Activated CD4-positive, alpha-beta T cell treated with anti-CD3 and anti-CD28 coated beads for 36 hours (primary cell): ENCODE measurements at regions of chr13 and their contacts with region 1.

Region 1: DNA sequence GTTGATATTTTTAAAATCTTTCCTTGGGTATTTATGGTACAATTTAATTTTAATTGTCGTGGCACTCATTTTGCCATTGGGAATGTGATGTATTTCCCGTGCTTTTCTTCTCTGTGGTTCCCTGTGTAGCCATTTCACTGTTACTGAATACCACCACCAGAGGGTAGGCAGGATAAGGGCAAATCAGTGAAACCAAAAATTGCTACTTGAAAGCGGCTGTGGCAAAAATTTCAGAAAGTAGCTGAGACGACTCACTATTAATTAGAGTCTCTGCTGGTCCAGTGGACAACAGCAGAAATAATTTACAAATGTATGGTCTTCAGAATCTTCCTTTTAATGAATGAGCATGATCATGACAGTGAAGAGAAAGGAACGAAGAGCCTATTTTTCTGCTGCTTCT is 34.4 kb upstream of the MIR17HG start:
- DNase-seq: peak; percentile 28
- ATAC-seq: peak; percentile 72
- H3K4me3 Mint-ChIP-seq: no peak overlapping the region
- H3K27ac Mint-ChIP-seq: no peak overlapping the region
- H3K4me1 Mint-ChIP-seq: peaks cover 18% of the 10 kb centered on the region
- H3K27me3 Mint-ChIP-seq: peaks cover 4% of the 10 kb centered on the region

Region 2: DNA sequence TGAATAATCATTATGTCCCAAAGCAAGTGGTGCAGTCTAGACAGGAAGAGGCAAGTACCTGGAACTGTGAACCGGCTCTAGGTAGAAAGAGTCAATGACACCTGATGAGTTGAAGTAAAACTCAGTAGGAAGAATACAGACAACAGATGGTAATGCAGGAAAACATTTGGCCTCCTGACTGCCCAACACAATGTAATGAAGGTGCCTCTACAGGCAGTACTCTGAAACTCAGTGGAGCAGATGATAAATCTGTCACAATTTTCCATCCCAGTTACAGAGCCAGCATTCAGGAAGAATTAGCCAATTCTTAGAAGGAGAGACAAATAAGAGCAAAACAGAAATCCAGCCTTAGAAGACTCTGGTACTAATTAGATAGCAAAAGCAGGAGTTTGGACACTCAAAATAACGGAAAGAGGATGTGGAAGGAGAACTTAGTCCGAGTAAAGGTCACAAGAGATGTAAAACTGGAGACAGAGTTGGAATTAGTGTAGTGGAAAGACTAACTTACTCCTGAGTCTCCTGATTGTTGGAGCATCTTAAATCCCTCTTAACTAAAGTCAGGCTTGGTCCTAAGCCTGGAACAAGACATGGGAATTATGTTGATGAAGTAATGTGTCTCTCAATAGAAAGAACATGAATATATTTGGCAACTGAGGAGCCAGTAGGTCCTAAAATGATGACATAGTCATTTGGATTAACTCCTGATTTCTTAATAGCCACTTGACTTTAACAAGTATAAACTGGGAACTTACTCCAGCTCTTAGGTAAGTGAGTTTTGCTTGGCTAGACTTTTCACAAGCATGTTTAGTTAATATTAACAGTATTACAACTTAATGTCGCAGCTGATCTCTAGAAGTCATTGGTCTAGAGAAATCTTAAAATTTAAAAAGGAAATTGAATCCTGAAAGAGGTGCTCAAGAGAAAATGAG is 422.9 kb before region 1 on chr13:
- CTCF ChIA-PET with region 1: no interaction called
- POLR2A ChIA-PET with region 1: no interaction called
- intact Hi-C with region 1: no loop called
- DNase-seq: no peak
- ATAC-seq: no peak
- H3K4me3 Mint-ChIP-seq: no peak overlapping the region
- H3K27ac Mint-ChIP-seq: no peak overlapping the region
- H3K4me1 Mint-ChIP-seq: no peaks in the 10 kb centered on the region
- H3K27me3 Mint-ChIP-seq: no peaks in the 10 kb centered on the region

Region 3: GRCh38 chr13:90918536-90918935 is 394.6 kb before region 1 on chr13:
- CTCF ChIA-PET with region 1: no interaction called
- POLR2A ChIA-PET with region 1: no interaction called
- intact Hi-C with region 1: no loop called
- DNase-seq: no peak
- ATAC-seq: no peak
- H3K4me3 Mint-ChIP-seq: no peak overlapping the region
- H3K27ac Mint-ChIP-seq: no peak overlapping the region
- H3K4me1 Mint-ChIP-seq: no peaks in the 10 kb centered on the region
- H3K27me3 Mint-ChIP-seq: no peaks in the 10 kb centered on the region

Region 4: DNA sequence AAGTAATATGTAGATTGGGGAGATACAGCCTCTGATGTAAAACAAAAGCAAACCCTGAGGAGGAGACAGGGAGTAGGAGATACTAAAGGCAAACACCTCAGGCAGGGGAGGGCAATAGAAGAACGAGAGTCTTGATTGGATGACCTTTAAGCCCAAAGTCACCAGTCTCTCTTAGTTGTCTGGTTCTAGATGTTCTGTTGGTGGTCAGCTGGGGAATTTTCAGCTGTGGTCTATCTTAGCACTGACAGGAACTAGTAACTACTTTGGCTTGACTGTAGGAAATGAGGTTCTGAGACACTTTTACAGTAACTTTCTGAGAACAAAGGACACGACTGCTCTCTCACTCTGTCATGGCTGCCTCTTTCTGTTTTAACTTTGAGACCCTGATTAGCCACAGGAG is 256.4 kb before region 1 on chr13:
- CTCF ChIA-PET with region 1: no interaction called
- POLR2A ChIA-PET with region 1: no interaction called
- intact Hi-C with region 1: no loop called
- DNase-seq: no peak
- ATAC-seq: no peak
- H3K4me3 Mint-ChIP-seq: no peak overlapping the region
- H3K27ac Mint-ChIP-seq: no peak overlapping the region
- H3K4me1 Mint-ChIP-seq: no peaks in the 10 kb centered on the region
- H3K27me3 Mint-ChIP-seq: no peaks in the 10 kb centered on the region

Region 5: GRCh38 chr13:91133941-91134802 is 178.9 kb before region 1 on chr13:
- CTCF ChIA-PET with region 1: no interaction called
- POLR2A ChIA-PET with region 1: no interaction called
- intact Hi-C with region 1: loop called in 1 of 2 experiments (anchors 5 kb)
- DNase-seq: peak; percentile 49
- ATAC-seq: peak; percentile 51
- H3K4me3 Mint-ChIP-seq: no peak overlapping the region
- H3K27ac Mint-ChIP-seq: no peak overlapping the region
- H3K4me1 Mint-ChIP-seq: no peaks in the 10 kb centered on the region
- H3K27me3 Mint-ChIP-seq: no peaks in the 10 kb centered on the region

Region 6: GRCh38 chr13:91331047-91331915 is 18.2 kb after region 1 on chr13:
- CTCF ChIA-PET with region 1: interaction called, 18 read pairs
- POLR2A ChIA-PET with region 1: no interaction called
- intact Hi-C with region 1: no loop called
- DNase-seq: no peak
- ATAC-seq: peak; percentile 90
- H3K4me3 Mint-ChIP-seq: peak overlapping the region; percentile 45
- H3K27ac Mint-ChIP-seq: peak overlapping the region; percentile 80
- H3K4me1 Mint-ChIP-seq: peaks cover 18% of the 10 kb centered on the region
- H3K27me3 Mint-ChIP-seq: peaks cover 5% of the 10 kb centered on the region

Region 7: DNA sequence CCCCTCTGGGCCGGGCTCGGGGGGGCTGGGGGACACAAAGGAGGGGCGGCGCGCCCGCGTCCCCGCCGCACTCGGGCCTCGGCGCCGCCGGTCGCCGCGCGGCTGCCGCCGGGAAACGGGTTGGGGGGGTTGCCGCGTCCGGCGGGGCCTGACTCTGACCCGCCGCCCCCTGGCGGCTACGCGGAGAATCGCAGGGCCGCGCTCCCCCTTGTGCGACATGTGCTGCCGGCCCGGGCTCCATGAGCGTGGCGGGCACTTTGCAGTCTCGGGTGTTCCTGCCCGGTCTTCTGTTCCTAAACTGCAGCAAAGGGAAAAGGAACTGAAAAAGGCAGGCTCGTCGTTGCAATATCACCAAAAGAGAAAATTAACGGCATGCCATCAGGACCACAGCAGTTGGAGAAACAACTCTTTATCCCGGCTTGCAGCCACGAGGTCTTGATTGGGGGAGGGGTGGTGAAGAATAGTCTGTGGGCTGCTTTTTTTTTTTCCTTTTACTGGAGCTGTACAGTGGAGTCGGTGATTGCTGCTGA is 35.9 kb after region 1 on chr13:
- CTCF ChIA-PET with region 1: interaction called, 19 read pairs
- POLR2A ChIA-PET with region 1: no interaction called
- intact Hi-C with region 1: loop called (anchors 1 kb)
- DNase-seq: peak; percentile 96
- ATAC-seq: peak; percentile 50
- H3K4me3 Mint-ChIP-seq: peak overlapping the region; percentile 92
- H3K27ac Mint-ChIP-seq: peak overlapping the region; percentile 96
- H3K4me1 Mint-ChIP-seq: peaks cover 46% of the 10 kb centered on the region
- H3K27me3 Mint-ChIP-seq: no peaks in the 10 kb centered on the region

Region 8: GRCh38 chr13:91398413-91399272 is 85.5 kb after region 1 on chr13 and contains the start of gene GPC5:
- CTCF ChIA-PET with region 1: interaction called, 3 read pairs
- POLR2A ChIA-PET with region 1: no interaction called
- intact Hi-C with region 1: loop called in 1 of 2 experiments (anchors 1 kb)
- DNase-seq: peak; percentile 92
- ATAC-seq: peak; percentile 98
- H3K4me3 Mint-ChIP-seq: peak within 1 kb of the TSS; percentile 69
- H3K27ac Mint-ChIP-seq: peak within 1 kb of the TSS; percentile 47
- H3K4me1 Mint-ChIP-seq: peaks cover 15% of the 10 kb centered on the region
- H3K27me3 Mint-ChIP-seq: peaks cover 48% of the 10 kb centered on the region
- total RNA-seq, gene GPC5: 0.63 to 0.66 TPM

Region 9: GRCh38 chr13:91406619-91407018 is 93.5 kb after region 1 on chr13:
- CTCF ChIA-PET with region 1: interaction called, 8 read pairs
- POLR2A ChIA-PET with region 1: no interaction called
- intact Hi-C with region 1: loop called (anchors 1 to 2 kb)
- DNase-seq: peak; percentile 30
- ATAC-seq: peak; percentile 51
- H3K4me3 Mint-ChIP-seq: no peak overlapping the region
- H3K27ac Mint-ChIP-seq: no peak overlapping the region
- H3K4me1 Mint-ChIP-seq: no peaks in the 10 kb centered on the region
- H3K27me3 Mint-ChIP-seq: peaks cover 14% of the 10 kb centered on the region

Region 10: DNA sequence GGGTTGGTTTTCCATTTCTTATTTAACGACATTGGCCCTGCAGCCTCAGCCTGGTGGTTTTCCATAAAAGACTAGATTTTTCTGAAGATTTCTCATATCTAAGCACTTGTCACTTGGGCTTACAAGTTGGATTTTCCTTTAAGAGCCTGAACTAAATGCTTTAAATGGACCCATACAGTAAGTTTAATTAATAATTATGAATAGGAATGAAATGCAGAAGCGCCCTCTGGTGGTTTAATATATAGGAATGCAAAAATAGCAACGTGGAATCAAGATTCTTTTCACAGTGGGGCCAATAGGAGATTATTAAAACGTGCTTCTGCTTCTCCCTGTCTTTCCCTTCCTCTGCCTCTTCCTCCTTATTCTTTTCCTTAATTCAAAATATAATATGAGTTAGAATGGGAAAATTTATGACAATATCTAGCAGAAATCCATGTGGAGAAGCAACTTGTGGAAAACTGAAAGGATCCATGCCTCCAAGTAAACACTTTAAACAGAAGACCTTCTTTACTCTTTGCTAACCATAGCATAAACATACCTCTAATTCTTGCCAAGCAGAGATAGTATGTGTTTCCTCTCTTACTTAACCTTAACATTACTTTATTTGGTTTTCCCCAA is 409.3 kb after region 1 on chr13:
- CTCF ChIA-PET with region 1: interaction called, 8 read pairs
- POLR2A ChIA-PET with region 1: no interaction called
- intact Hi-C with region 1: loop called (anchors 5 kb)
- DNase-seq: no peak
- ATAC-seq: no peak
- H3K4me3 Mint-ChIP-seq: no peak overlapping the region
- H3K27ac Mint-ChIP-seq: no peak overlapping the region
- H3K4me1 Mint-ChIP-seq: no peaks in the 10 kb centered on the region
- H3K27me3 Mint-ChIP-seq: peaks cover 8% of the 10 kb centered on the region